CD4-positive, alpha-beta T cell (primary cell): ENCODE measurements at regions of chr2 and their contacts with region 1.

Region 1: DNA sequence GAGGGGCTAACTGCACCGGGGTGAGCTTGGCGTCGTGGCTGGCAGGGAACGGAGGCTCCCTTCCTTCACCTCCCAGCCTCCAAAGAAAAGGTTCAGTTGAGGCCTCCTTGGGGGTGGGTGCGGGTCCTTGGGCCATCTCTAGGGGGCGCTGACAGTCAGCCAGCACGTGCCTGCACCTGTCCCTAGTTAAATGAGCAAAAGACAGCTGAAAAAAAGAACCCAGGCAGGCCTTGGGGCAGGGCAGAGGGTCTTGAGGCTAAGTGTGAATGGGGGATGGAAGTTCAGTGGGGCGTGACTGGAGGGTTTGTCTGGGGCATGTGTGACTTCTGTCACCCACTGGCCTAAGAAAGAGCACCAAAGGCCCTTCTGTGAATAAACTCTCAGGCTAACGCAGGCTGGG is 56.4 kb downstream of the ZFP36L2 start:
- DNase-seq: peak; percentile 49 to 83 (median 70)
- ATAC-seq: peak; percentile 16
- H3K4me3 ChIP-seq: peak overlapping the region; percentile 26
- H3K4me3 Mint-ChIP-seq: peak overlapping the region; percentile 13
- H3K27ac ChIP-seq: peak overlapping the region; percentile 72 to 76
- H3K27ac Mint-ChIP-seq: peak overlapping the region; percentile 97
- H3K4me1 ChIP-seq: peaks cover 85% of the 10 kb centered on the region
- H3K4me1 Mint-ChIP-seq: peaks cover 82% of the 10 kb centered on the region
- H3K27me3 ChIP-seq: no peaks in the 10 kb centered on the region
- H3K27me3 Mint-ChIP-seq: no peaks in the 10 kb centered on the region
- CTCF ChIP-seq: peak; percentile 75

Region 2: DNA sequence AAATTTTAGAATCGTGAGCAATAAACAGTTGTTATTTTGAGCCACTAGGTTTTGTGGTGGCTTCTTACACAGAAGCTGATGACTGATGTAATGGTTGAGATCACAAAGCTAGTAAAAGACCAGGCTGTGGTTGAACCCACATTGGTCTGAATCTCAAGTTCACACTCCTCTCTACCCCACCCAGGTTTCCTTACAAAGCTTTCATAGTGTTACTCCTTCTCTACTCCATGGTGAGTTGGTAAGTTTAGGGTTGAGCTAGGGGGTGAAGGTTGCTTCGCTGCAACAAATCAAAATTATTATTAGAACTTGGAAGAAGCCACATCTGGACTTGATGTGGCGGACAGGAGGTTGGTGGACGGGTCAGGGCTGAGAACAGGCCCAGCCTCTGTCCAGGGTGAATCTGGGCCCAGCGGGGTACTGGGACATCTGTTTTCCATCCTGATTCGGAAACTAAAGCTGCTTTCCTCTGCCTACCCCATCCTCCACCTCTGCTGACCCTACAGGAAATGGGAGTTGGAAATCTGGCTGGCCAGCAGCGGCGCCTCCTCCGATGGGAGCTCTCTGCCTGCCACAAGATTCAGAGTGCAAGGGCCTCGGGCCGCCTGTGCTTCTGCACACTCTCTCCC is 29.9 kb before region 1 on chr2:
- CTCF ChIA-PET with region 1: interaction called, 12 read pairs
- POLR2A ChIA-PET with region 1: interaction called, 165 read pairs
- intact Hi-C with region 1: no loop called
- DNase-seq: peak in 5 of 14 experiments; percentile 11 to 76 (median 59)
- ATAC-seq: no peak
- H3K4me3 ChIP-seq: no peak overlapping the region
- H3K4me3 Mint-ChIP-seq: peak overlapping the region; percentile 31
- H3K27ac ChIP-seq: peak overlapping the region; percentile 23 to 54
- H3K27ac Mint-ChIP-seq: peak overlapping the region; percentile 99
- H3K4me1 ChIP-seq: peaks cover 85% of the 10 kb centered on the region
- H3K4me1 Mint-ChIP-seq: peaks cover 76% of the 10 kb centered on the region
- H3K27me3 ChIP-seq: no peaks in the 10 kb centered on the region
- H3K27me3 Mint-ChIP-seq: no peaks in the 10 kb centered on the region
- CTCF ChIP-seq: no peak

Region 3: DNA sequence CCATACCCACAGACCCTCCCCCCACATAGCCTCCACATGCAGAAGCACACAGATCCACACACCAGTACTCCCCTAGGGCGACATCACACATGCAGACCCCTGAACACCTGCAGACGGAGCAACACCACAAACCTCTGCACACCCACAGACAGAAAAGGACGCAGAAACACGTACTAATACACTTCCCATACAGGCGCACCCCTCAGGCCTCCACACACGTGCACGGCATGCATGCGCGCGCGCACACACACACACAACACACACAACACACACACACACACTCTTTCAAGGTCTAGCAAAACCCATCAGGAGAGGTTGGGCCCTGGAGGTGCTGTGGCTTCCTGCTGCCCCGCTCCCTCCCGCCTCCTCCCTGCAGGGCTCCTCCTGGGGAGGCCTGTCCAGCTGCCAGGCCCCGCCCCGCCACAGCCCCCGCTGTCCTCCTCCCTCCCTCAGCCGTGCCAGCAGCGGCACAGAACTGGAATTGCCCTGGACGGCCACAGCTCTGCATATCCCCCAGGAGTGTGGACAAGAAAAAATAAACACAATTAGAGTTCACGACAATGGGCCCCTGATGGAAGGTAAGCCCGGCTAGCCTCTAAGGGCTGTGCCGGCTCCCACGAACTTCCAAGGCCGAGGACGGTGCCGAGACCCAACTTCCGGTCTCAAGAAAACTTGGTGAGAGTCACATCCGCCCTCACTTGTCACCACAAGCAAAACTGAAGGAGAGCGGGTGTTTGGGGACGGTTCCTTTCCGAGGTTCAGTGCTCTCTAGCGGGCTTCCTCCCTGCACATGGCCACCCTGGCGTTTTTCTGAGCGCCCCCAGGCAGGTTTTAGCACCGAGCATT is 49.6 kb after region 1 on chr2:
- CTCF ChIA-PET with region 1: interaction called, 37 read pairs
- POLR2A ChIA-PET with region 1: interaction called, 790 read pairs
- intact Hi-C with region 1: loop called (anchors 1 kb)
- DNase-seq: peak; percentile 65 to 93 (median 76)
- ATAC-seq: peak; percentile 38
- H3K4me3 ChIP-seq: peak overlapping the region; percentile 97
- H3K4me3 Mint-ChIP-seq: peak overlapping the region; percentile 87
- H3K27ac ChIP-seq: peak overlapping the region; percentile 62 to 92
- H3K27ac Mint-ChIP-seq: peak overlapping the region; percentile 98
- H3K4me1 ChIP-seq: peaks cover 69% of the 10 kb centered on the region
- H3K4me1 Mint-ChIP-seq: peaks cover 62% of the 10 kb centered on the region
- H3K27me3 ChIP-seq: no peaks in the 10 kb centered on the region
- H3K27me3 Mint-ChIP-seq: peaks cover 19% of the 10 kb centered on the region
- CTCF ChIP-seq: no peak

Region 4: DNA sequence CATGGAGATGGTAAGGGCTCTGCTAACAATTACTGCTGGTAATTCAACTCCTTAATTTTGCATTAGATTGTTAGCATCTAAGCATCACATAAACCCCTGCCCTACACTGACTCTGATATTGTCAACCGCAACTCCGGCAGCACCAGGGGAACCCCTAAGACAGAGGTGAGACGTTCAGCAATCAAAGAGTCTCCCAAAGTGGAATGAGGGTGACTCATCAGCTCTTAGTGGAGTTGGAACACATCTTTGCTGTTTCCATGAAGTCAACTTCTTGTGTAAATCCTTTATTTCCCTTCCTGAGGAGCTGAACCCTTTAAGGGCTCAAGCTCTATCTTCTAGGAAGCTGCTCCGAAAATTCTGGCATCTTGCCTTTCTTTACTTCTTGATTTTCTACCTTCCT is 720.9 kb after region 1 on chr2:
- CTCF ChIA-PET with region 1: no interaction called
- POLR2A ChIA-PET with region 1: no interaction called
- intact Hi-C with region 1: no loop called
- DNase-seq: no peak
- ATAC-seq: no peak
- H3K4me3 ChIP-seq: no peak overlapping the region
- H3K4me3 Mint-ChIP-seq: no peak overlapping the region
- H3K27ac ChIP-seq: no peak overlapping the region
- H3K27ac Mint-ChIP-seq: no peak overlapping the region
- H3K4me1 ChIP-seq: no peaks in the 10 kb centered on the region
- H3K4me1 Mint-ChIP-seq: no peaks in the 10 kb centered on the region
- H3K27me3 ChIP-seq: no peaks in the 10 kb centered on the region
- H3K27me3 Mint-ChIP-seq: no peaks in the 10 kb centered on the region
- CTCF ChIP-seq: no peak